Panc1 (cell line): ENCODE measurements at regions of chr6 and their contacts with region 1.

Region 1: GRCh38 chr6:103356531-103356930 is 1503.2 kb downstream of the HACE1 start:
- DNase-seq: no peak
- ATAC-seq: no peak
- H3K4me3 ChIP-seq: no peak overlapping the region
- H3K27ac ChIP-seq: no peak overlapping the region
- H3K4me1 ChIP-seq: no peaks in the 10 kb centered on the region
- H3K27me3 ChIP-seq: no peaks in the 10 kb centered on the region
- CTCF ChIP-seq: no peak

Region 2: DNA sequence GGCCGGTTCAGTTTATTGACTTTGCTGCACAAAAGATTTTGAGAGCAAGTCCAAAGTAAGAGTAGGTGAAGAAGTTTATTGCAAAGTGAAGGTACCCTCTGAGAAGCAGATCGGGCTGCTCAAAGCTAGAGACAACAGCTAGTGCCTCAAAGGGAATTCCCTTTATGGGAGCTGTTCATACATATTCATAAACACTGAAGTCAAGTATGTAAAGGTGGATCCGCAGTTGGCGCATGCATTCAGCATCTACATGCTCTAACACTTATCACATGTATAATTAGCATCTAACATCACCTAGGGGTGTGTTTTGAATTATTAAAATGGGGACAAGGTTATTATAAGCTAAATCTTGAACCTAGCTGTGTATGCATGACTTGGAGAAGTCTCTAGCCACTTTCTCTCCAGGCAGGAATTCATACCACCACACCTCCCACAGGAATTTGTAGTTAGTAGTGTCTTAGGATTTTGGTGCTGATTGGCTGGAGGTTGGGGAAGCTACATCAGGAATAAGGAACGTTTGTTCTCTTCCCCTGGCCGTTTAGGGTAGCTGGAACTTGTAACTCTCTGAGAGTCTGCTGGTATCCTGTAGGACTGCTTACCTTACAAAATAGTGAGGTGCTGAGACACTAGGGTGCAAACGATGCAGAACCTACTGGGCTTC is 329.1 kb before region 1 on chr6:
- CTCF ChIA-PET with region 1: no interaction called
- POLR2A ChIA-PET with region 1: no interaction called
- in situ Hi-C with region 1: no loop called
- intact Hi-C with region 1: no loop called
- DNase-seq: no peak
- ATAC-seq: no peak
- H3K4me3 ChIP-seq: no peak overlapping the region
- H3K27ac ChIP-seq: no peak overlapping the region
- H3K4me1 ChIP-seq: no peaks in the 10 kb centered on the region
- H3K27me3 ChIP-seq: no peaks in the 10 kb centered on the region
- CTCF ChIP-seq: no peak

Region 3: DNA sequence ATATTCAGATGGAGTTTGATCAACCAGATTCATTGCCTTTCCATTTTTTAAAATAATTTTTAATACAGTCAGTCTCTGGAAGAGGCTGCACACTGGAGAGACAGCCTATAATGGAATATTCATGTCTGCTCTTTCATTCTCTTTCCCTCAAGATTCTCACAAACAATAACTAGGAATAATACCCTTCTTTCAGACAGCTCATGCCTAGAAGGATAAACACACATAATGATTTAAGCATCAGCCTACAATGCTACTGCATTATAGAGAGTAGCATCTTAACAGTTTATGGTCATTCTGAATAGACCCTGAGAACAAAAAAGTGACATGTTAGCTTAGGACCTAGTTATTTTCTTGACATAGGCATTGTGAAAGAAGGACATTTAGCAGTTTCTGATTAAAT is 270.7 kb before region 1 on chr6:
- CTCF ChIA-PET with region 1: no interaction called
- POLR2A ChIA-PET with region 1: interaction called, 12 read pairs
- in situ Hi-C with region 1: no loop called
- intact Hi-C with region 1: no loop called
- DNase-seq: no peak
- ATAC-seq: no peak
- H3K4me3 ChIP-seq: no peak overlapping the region
- H3K27ac ChIP-seq: no peak overlapping the region
- H3K4me1 ChIP-seq: no peaks in the 10 kb centered on the region
- H3K27me3 ChIP-seq: no peaks in the 10 kb centered on the region
- CTCF ChIP-seq: no peak

Region 4: DNA sequence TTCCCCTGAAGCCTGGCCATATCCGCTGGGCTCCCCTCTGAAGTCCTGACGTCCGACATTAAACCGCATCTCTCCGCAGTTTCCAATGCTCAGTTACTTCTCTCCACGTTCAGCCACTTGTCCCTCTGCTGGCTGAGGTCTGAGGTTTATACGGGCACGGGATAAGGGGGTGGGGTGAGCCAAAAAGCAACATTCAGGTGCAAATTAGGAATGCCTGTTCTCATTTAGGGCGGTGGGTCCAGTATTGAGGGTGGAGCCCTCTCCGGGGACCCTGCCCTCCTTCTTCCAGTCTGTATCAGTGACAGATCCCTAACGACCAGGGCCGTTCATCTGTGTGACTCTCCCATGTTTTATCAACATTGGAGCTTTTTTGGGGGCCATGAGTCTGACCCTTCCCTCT is 48.8 kb after region 1 on chr6:
- CTCF ChIA-PET with region 1: no interaction called
- POLR2A ChIA-PET with region 1: no interaction called
- in situ Hi-C with region 1: no loop called
- intact Hi-C with region 1: no loop called
- DNase-seq: no peak
- ATAC-seq: no peak
- H3K4me3 ChIP-seq: no peak overlapping the region
- H3K27ac ChIP-seq: no peak overlapping the region
- H3K4me1 ChIP-seq: no peaks in the 10 kb centered on the region
- H3K27me3 ChIP-seq: no peaks in the 10 kb centered on the region
- CTCF ChIP-seq: no peak